Activated CD8-positive, alpha-beta T cell treated with anti-CD3 and anti-CD28 coated beads for 36 hours (primary cell): ENCODE measurements at regions of chr1 and their contacts with region 1.

Region 1: GRCh38 chr1:107529502-107530149 is 388.8 kb downstream of the NTNG1 start:
- DNase-seq: peak; percentile 25
- ATAC-seq: peak; percentile 71
- H3K4me3 Mint-ChIP-seq: no peak overlapping the region
- H3K27ac Mint-ChIP-seq: no peak overlapping the region
- H3K4me1 Mint-ChIP-seq: no peaks in the 10 kb centered on the region
- H3K27me3 Mint-ChIP-seq: no peaks in the 10 kb centered on the region
- CTCF ChIP-seq: peak; percentile 75

Region 2: GRCh38 chr1:106975944-106976343 is 553.7 kb before region 1 on chr1:
- CTCF ChIA-PET with region 1: no interaction called
- POLR2A ChIA-PET with region 1: no interaction called
- intact Hi-C with region 1: no loop called
- DNase-seq: no peak
- ATAC-seq: no peak
- H3K4me3 Mint-ChIP-seq: no peak overlapping the region
- H3K27ac Mint-ChIP-seq: no peak overlapping the region
- H3K4me1 Mint-ChIP-seq: no peaks in the 10 kb centered on the region
- H3K27me3 Mint-ChIP-seq: no peaks in the 10 kb centered on the region
- CTCF ChIP-seq: no peak

Region 3: GRCh38 chr1:107430540-107431228 is 98.9 kb before region 1 on chr1:
- CTCF ChIA-PET with region 1: interaction called, 54 read pairs
- POLR2A ChIA-PET with region 1: no interaction called
- intact Hi-C with region 1: loop called (anchors 1 kb)
- DNase-seq: peak; percentile 49
- ATAC-seq: peak; percentile 49
- H3K4me3 Mint-ChIP-seq: no peak overlapping the region
- H3K27ac Mint-ChIP-seq: no peak overlapping the region
- H3K4me1 Mint-ChIP-seq: no peaks in the 10 kb centered on the region
- H3K27me3 Mint-ChIP-seq: peaks cover 1% of the 10 kb centered on the region
- CTCF ChIP-seq: peak; percentile 73

Region 4: DNA sequence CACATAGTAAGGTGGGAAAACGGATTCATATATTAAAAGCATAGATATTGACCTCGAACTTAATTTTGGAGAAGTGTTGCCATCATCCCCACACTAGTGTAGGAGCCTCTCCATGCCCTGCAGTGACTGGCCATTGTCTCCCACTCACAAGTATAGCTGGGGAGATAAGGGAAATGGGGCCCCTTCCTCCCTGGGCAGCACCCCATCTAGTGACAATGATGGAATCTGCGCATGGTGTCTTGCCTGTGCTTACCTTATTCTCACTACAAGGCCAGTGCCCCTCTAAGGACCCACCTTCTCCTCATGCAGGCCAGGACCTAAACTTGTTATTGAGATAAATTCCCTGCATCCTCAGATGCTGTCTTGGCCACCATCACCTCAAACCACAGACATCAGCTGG is 13.9 kb before region 1 on chr1:
- CTCF ChIA-PET with region 1: interaction called, 13 read pairs
- POLR2A ChIA-PET with region 1: no interaction called
- intact Hi-C with region 1: no loop called
- DNase-seq: no peak
- ATAC-seq: no peak
- H3K4me3 Mint-ChIP-seq: no peak overlapping the region
- H3K27ac Mint-ChIP-seq: no peak overlapping the region
- H3K4me1 Mint-ChIP-seq: no peaks in the 10 kb centered on the region
- H3K27me3 Mint-ChIP-seq: no peaks in the 10 kb centered on the region
- CTCF ChIP-seq: no peak

Region 5: DNA sequence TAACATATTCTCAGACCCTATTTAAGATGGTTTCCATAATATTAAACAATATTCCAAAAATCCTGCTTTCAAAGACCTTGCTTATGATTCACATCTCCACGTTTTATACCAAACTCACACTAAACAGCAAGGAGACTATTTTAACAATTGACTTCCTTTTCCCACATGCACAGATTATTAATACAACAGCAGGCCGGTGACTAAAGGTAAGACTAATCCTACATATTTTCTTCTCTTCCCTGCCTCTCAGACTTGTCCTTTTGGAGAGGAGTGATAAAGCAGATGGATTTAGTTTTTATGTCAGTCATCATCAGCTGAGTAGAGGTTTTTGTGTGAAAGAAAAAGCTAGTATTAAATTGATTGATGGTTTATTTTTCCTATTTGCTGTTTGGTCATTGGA is 11.8 kb after region 1 on chr1:
- CTCF ChIA-PET with region 1: interaction called, 13 read pairs
- POLR2A ChIA-PET with region 1: no interaction called
- intact Hi-C with region 1: no loop called
- DNase-seq: no peak
- ATAC-seq: no peak
- H3K4me3 Mint-ChIP-seq: no peak overlapping the region
- H3K27ac Mint-ChIP-seq: no peak overlapping the region
- H3K4me1 Mint-ChIP-seq: no peaks in the 10 kb centered on the region
- H3K27me3 Mint-ChIP-seq: no peaks in the 10 kb centered on the region
- CTCF ChIP-seq: no peak